Activated T-helper 2 cell treated with anti-CD3 and anti-CD28 coated beads, Interferon-gamma antibody, Interleukin-2, Interleukin-4, amounts not matched to agents 10 μg/mL and 5 μg/mL and 100 μg/mL, durations not matched to agents 14 hours and 24 hours and 36 hours (primary cell): ENCODE measurements at regions of chr18 and their contacts with region 1.

Region 1: GRCh38 chr18:62324917-62325805 is at the start of gene TNFRSF11A:
- DNase-seq: peak; percentile 62
- H3K4me3 Mint-ChIP-seq: peak within 1 kb of the TSS; percentile 92
- H3K27ac Mint-ChIP-seq: peak within 1 kb of the TSS; percentile 82
- H3K4me1 Mint-ChIP-seq: peaks cover 56% of the 10 kb centered on the region
- H3K27me3 Mint-ChIP-seq: peaks cover 32% of the 10 kb centered on the region
- total RNA-seq, gene TNFRSF11A: 38.2 and 43.0 TPM in 2 replicates

Region 2: GRCh38 chr18:62186774-62187542 is 138.2 kb before region 1 on chr18 and contains the starts of genes PIGN and RELCH:
- intact Hi-C with region 1: loop called (anchors 5 kb)
- DNase-seq: peak; percentile 94
- H3K4me3 Mint-ChIP-seq: peak within 1 kb of the TSS; percentile 97
- H3K27ac Mint-ChIP-seq: peak within 1 kb of the TSS; percentile 92
- H3K4me1 Mint-ChIP-seq: peaks cover 42% of the 10 kb centered on the region
- H3K27me3 Mint-ChIP-seq: no peaks in the 10 kb centered on the region
- total RNA-seq, gene PIGN: 29.4 and 29.6 TPM in 2 replicates
- total RNA-seq, gene RELCH: 29.1 and 32.3 TPM in 2 replicates

Region 3: DNA sequence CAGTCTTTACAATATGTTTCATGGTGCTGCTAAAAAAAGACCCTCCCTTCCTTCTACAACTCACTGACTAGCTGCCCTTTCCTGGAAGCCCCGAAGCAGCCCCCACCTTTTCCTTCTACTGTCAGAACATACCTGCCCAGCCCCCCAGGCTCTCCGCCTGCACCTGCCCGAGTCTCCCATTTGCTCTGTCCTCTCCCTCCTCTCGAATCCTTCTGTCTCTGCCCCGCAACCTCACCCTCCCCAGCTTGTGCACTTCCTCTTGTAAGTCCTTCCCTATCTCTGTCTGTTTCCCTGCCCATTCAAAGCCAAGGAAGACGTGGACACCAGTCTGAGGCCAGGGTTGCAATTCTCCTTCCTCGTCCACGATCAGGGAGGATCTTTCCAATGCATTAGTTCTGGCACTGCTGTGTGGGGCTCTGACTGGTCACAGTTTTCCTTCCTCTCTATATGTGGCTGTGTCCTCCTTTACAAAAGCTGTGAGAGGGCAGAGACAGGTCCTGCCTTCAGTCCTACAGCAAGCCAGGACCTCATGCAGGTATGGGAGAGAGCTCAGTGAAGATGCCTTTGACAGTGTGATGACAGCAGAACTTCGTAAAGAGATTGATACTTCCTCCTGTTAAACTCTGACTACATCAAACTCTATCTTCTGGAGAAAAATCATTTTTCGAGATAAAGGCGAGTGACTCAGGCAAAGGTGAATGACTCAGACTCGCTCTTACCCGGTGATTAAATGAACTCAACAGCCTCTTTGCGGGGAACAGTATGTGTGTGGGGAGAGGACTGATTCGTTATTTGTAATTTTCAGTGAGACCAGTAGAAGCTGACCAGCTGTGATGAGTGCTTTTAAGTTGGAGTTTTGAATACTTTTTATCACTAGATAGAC is 14.2 kb after region 1 on chr18:
- intact Hi-C with region 1: loop called (anchors 1 kb)
- DNase-seq: peak; percentile 23
- H3K4me3 Mint-ChIP-seq: peak overlapping the region; percentile 61
- H3K27ac Mint-ChIP-seq: peak overlapping the region; percentile 96
- H3K4me1 Mint-ChIP-seq: peaks cover 69% of the 10 kb centered on the region
- H3K27me3 Mint-ChIP-seq: no peaks in the 10 kb centered on the region

Region 4: GRCh38 chr18:62368100-62368499 is 42.9 kb after region 1 on chr18:
- intact Hi-C with region 1: loop called (anchors 2 kb)
- DNase-seq: no peak
- H3K4me3 Mint-ChIP-seq: no peak overlapping the region
- H3K27ac Mint-ChIP-seq: peak overlapping the region; percentile 57
- H3K4me1 Mint-ChIP-seq: peaks cover 60% of the 10 kb centered on the region
- H3K27me3 Mint-ChIP-seq: no peaks in the 10 kb centered on the region

Region 5: DNA sequence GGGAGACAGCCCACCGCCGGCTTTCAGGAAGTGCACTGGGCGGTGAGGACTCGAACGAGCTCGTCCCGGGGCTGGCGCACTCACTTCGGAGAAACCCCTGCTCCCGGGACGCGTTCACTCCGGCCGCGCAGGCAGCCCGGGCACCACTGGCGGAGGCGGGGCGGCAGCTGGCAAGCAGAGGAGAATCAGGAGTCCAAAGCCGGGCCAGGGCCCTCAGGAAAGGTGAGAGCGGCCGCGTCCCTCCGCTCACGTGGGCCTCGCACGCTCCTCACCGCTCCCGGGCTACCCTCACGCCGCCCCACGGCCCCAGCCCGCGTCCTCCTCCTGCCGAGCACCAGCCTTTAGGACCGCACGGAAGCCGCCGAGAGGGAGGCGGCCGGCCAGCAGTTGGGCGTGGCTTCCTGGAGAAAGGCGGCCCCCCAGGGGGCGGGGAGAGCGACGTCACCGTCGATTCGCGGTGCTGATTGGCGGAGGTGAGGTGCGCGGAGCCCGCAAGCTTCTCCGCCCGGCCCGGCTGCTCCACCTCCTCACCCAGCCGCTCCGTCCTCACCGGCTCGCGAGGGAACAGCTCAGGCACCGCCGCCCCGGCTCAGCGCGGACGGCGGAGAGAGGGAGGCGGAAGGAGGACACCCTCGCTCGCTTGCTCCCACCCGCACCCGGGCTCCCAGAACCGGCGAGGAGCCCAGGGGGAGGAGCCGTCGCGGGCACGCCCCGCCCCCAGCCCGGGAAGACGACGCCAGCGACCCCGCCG is 197.5 kb after region 1 on chr18 and contains the start of gene ZCCHC2:
- intact Hi-C with region 1: loop called (anchors 2 kb)
- DNase-seq: peak; percentile 99
- H3K4me3 Mint-ChIP-seq: peak within 1 kb of the TSS; percentile 95
- H3K27ac Mint-ChIP-seq: peak within 1 kb of the TSS; percentile 88
- H3K4me1 Mint-ChIP-seq: peaks cover 29% of the 10 kb centered on the region
- H3K27me3 Mint-ChIP-seq: no peaks in the 10 kb centered on the region
- total RNA-seq, gene ZCCHC2: 43.8 and 48.6 TPM in 2 replicates

Region 6: DNA sequence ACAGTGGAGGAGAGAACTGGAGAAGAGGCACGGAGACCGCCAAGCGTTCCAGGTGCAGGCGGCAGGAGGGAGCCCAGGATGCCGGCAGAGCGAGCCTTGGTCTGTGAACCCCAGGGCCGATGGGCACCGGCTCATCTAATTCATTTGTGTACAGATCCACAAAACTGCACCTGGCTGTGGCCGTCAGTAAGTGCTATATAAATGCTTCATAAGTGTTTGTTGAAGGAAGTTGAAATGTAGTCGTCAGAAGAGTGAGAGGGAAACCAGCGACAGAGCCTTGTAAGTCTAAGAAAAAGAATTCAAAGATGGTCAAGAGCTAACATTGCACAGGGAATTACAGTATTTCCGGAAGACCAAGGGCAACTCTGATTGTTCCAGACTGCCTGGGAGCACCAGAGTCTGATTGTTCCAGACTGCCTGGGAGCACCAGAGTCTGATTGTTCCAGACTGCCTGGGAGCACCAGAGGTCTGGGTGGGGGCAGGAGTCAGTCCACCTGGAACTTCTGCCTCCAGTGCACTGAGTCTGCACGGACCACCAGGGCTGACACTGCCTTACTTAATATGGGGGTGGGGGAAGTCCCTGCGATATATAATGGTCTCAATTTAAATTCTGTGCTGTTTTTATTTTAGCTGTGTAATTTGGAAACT is 882.1 kb after region 1 on chr18:
- intact Hi-C with region 1: loop called (anchors 10 kb)
- DNase-seq: no peak
- H3K4me3 Mint-ChIP-seq: peak overlapping the region; percentile 87
- H3K27ac Mint-ChIP-seq: peak overlapping the region; percentile 87
- H3K4me1 Mint-ChIP-seq: peaks cover 81% of the 10 kb centered on the region
- H3K27me3 Mint-ChIP-seq: no peaks in the 10 kb centered on the region